ENCODE measurements at regions of chr11 and their contacts with region 1.

Region 1: GRCh38 chr11:35391922-35392813 is 27.2 kb downstream of the SLC1A2 start:
- DNase-seq: peak; percentile 72 to 94 (median 86)
- ATAC-seq: peak; percentile 79
- H3K4me3 ChIP-seq: no peak overlapping the region
- H3K4me3 Mint-ChIP-seq: peak overlapping the region; percentile 75
- H3K27ac ChIP-seq: no peak overlapping the region
- H3K27ac Mint-ChIP-seq: no peak overlapping the region
- H3K4me1 ChIP-seq: peaks cover 19% of the 10 kb centered on the region
- H3K4me1 Mint-ChIP-seq: peaks cover 26% of the 10 kb centered on the region
- H3K27me3 ChIP-seq: no peaks in the 10 kb centered on the region
- H3K27me3 Mint-ChIP-seq: no peaks in the 10 kb centered on the region
- CTCF ChIP-seq: peak; percentile 93

Region 2: GRCh38 chr11:34512840-34513681 is 879.1 kb before region 1 on chr11:
- CTCF ChIA-PET with region 1: no interaction called
- POLR2A ChIA-PET with region 1: no interaction called
- intact Hi-C with region 1: loop called in 1 of 2 experiments (anchors 10 kb)
- DNase-seq: peak in 13 of 14 experiments; percentile 5 to 63 (median 28)
- ATAC-seq: peak; percentile 65
- H3K4me3 ChIP-seq: no peak overlapping the region
- H3K4me3 Mint-ChIP-seq: no peak overlapping the region
- H3K27ac ChIP-seq: no peak overlapping the region
- H3K27ac Mint-ChIP-seq: no peak overlapping the region
- H3K4me1 ChIP-seq: no peaks in the 10 kb centered on the region
- H3K4me1 Mint-ChIP-seq: no peaks in the 10 kb centered on the region
- H3K27me3 ChIP-seq: no peaks in the 10 kb centered on the region
- H3K27me3 Mint-ChIP-seq: no peaks in the 10 kb centered on the region
- CTCF ChIP-seq: peak; percentile 64

Region 3: DNA sequence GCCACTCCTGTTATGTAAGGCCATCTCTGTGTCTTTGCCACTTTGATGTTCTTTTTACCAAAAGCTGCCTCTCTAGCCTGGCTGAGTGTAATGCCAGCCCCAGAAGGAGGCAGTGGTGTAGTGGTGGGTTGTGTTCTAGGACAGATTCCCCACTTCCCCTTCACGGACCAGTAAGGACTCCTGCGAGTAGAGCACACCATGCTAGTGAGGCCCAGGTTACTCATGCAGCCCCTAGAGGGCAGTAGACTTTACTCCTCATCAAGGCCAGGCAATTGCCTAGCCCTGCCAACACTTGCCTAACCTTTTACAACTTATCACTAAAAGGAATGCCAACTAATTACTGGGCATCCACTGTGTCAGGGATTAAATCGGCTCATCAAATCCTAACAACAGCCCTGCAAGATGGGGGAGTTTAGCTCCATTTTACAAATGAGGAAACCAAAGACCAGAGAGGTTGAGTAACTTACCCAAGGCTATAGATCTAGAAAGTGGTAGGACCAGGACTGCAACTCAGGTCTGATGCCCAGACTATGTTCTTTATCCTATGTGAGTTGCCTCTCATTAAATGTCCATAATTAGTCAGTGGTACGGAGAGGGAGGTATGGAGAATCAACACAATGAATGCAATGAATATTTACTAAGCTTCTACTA is 551.3 kb before region 1 on chr11:
- CTCF ChIA-PET with region 1: no interaction called
- POLR2A ChIA-PET with region 1: no interaction called
- intact Hi-C with region 1: loop called in 1 of 2 experiments (anchors 2 kb)
- DNase-seq: peak in 5 of 14 experiments; percentile 4 to 62 (median 27)
- ATAC-seq: peak; percentile 44
- H3K4me3 ChIP-seq: no peak overlapping the region
- H3K4me3 Mint-ChIP-seq: no peak overlapping the region
- H3K27ac ChIP-seq: no peak overlapping the region
- H3K27ac Mint-ChIP-seq: no peak overlapping the region
- H3K4me1 ChIP-seq: no peaks in the 10 kb centered on the region
- H3K4me1 Mint-ChIP-seq: no peaks in the 10 kb centered on the region
- H3K27me3 ChIP-seq: peaks cover 0 to 7% of the 10 kb centered on the region in 2 experiments
- H3K27me3 Mint-ChIP-seq: peaks cover 19% of the 10 kb centered on the region
- CTCF ChIP-seq: peak; percentile 57

Region 4: GRCh38 chr11:35087648-35088047 is 304.5 kb before region 1 on chr11:
- CTCF ChIA-PET with region 1: no interaction called
- POLR2A ChIA-PET with region 1: no interaction called
- intact Hi-C with region 1: loop called in 1 of 2 experiments (anchors 5 kb)
- DNase-seq: peak in 3 of 14 experiments; percentile 27 to 53 (median 50)
- ATAC-seq: no peak
- H3K4me3 ChIP-seq: no peak overlapping the region
- H3K4me3 Mint-ChIP-seq: no peak overlapping the region
- H3K27ac ChIP-seq: no peak overlapping the region
- H3K27ac Mint-ChIP-seq: peak overlapping the region; percentile 69
- H3K4me1 ChIP-seq: peaks cover 60% of the 10 kb centered on the region
- H3K4me1 Mint-ChIP-seq: peaks cover 91% of the 10 kb centered on the region
- H3K27me3 ChIP-seq: no peaks in the 10 kb centered on the region
- H3K27me3 Mint-ChIP-seq: no peaks in the 10 kb centered on the region
- CTCF ChIP-seq: no peak

Region 5: GRCh38 chr11:35237860-35238715 is 154.1 kb before region 1 on chr11:
- CTCF ChIA-PET with region 1: no interaction called
- POLR2A ChIA-PET with region 1: interaction called, 4 read pairs
- intact Hi-C with region 1: loop called in 1 of 2 experiments (anchors 5 kb)
- DNase-seq: peak in 8 of 14 experiments; percentile 23 to 83 (median 50)
- ATAC-seq: no peak
- H3K4me3 ChIP-seq: no peak overlapping the region
- H3K4me3 Mint-ChIP-seq: peak overlapping the region; percentile 39
- H3K27ac ChIP-seq: no peak overlapping the region
- H3K27ac Mint-ChIP-seq: peak overlapping the region; percentile 77
- H3K4me1 ChIP-seq: peaks cover 47% of the 10 kb centered on the region
- H3K4me1 Mint-ChIP-seq: peaks cover 85% of the 10 kb centered on the region
- H3K27me3 ChIP-seq: no peaks in the 10 kb centered on the region
- H3K27me3 Mint-ChIP-seq: no peaks in the 10 kb centered on the region
- CTCF ChIP-seq: peak; percentile 74

Region 6: DNA sequence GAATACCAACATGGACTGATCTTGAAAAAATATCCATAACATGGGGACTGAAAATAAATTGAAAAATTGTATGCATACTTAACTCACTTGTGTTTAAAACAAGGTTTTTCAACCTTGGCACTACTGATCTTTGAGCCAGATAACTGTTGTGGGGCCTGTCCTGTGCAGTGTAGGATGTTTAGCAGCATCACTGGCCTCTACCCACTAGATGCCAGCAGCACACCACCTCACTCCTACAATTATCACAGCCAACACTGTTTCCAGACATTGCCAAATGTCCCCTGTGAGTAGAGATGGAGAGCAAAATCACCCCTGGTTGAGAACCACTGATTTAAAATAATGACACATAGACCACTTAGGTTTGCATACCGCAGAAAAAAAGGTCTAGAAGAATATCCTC is 72.1 kb after region 1 on chr11:
- CTCF ChIA-PET with region 1: no interaction called
- POLR2A ChIA-PET with region 1: no interaction called
- intact Hi-C with region 1: no loop called
- DNase-seq: no peak
- ATAC-seq: no peak
- H3K4me3 ChIP-seq: no peak overlapping the region
- H3K4me3 Mint-ChIP-seq: no peak overlapping the region
- H3K27ac ChIP-seq: no peak overlapping the region
- H3K27ac Mint-ChIP-seq: no peak overlapping the region
- H3K4me1 ChIP-seq: no peaks in the 10 kb centered on the region
- H3K4me1 Mint-ChIP-seq: no peaks in the 10 kb centered on the region
- H3K27me3 ChIP-seq: no peaks in the 10 kb centered on the region
- H3K27me3 Mint-ChIP-seq: peaks cover 65% of the 10 kb centered on the region
- CTCF ChIP-seq: no peak

Region 7: DNA sequence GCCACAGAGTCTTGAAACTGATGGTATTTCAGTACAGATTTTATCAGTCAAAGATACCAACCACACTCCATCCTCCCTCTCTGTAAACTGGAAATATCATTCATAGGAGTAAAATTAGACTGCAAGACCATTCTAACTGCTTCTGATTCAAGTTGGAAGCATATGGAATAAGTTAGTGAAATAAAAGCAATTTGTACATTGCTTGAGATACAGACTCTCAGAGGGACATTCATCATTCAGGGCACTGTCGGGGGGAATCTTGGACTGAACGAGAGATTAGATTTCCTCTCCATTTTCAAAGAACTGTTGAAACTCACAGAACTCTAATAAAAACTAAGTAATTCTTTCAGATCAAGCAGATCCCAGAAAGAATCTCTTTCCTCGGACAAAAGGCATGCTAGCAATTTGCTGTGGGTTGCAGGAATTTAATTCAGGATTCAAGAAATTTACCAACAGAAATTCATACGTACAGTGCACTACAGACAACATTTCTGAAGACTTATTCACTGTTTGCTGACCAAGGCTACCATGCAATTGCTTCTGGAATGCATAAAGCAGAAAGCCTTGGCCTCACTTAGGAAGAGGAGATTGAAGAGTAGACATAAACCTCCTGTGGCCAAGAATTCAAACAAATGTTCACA is 99.2 kb after region 1 on chr11:
- CTCF ChIA-PET with region 1: no interaction called
- POLR2A ChIA-PET with region 1: no interaction called
- intact Hi-C with region 1: no loop called
- DNase-seq: no peak
- ATAC-seq: no peak
- H3K4me3 ChIP-seq: no peak overlapping the region
- H3K4me3 Mint-ChIP-seq: no peak overlapping the region
- H3K27ac ChIP-seq: no peak overlapping the region
- H3K27ac Mint-ChIP-seq: no peak overlapping the region
- H3K4me1 ChIP-seq: no peaks in the 10 kb centered on the region
- H3K4me1 Mint-ChIP-seq: no peaks in the 10 kb centered on the region
- H3K27me3 ChIP-seq: peaks cover 12 to 14% of the 10 kb centered on the region in 2 experiments
- H3K27me3 Mint-ChIP-seq: peaks cover 30% of the 10 kb centered on the region
- CTCF ChIP-seq: no peak